ENCODE measurements at regions of chr15 and their contacts with region 1.

Region 1: DNA sequence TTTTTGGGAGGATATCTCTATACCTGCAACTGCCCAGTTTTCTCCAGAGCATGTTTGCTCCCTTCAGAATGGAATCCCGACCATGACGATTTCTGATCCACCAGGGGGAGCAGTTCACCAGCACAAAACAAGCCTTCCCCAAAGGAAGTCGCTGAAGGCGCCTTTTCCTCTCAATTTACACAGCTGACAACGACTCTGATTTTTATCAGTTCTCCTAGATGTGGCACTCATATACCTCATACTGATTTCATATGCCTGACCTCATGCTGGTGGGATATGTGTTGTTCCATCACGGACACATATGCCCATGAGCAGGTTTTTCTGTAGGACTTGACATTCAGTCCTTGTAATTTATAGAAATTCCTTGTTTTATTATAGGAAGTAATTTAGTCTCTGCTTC is 1028.2 kb downstream of the MCTP2 start:
- DNase-seq: peak; percentile 43
- ATAC-seq: peak; percentile 79

Region 2: GRCh38 chr15:95843241-95843910 is 583.9 kb after region 1 on chr15:
- intact Hi-C with region 1: loop called (anchors 10 kb)
- DNase-seq: peak; percentile 53
- ATAC-seq: peak; percentile 71

Region 3: DNA sequence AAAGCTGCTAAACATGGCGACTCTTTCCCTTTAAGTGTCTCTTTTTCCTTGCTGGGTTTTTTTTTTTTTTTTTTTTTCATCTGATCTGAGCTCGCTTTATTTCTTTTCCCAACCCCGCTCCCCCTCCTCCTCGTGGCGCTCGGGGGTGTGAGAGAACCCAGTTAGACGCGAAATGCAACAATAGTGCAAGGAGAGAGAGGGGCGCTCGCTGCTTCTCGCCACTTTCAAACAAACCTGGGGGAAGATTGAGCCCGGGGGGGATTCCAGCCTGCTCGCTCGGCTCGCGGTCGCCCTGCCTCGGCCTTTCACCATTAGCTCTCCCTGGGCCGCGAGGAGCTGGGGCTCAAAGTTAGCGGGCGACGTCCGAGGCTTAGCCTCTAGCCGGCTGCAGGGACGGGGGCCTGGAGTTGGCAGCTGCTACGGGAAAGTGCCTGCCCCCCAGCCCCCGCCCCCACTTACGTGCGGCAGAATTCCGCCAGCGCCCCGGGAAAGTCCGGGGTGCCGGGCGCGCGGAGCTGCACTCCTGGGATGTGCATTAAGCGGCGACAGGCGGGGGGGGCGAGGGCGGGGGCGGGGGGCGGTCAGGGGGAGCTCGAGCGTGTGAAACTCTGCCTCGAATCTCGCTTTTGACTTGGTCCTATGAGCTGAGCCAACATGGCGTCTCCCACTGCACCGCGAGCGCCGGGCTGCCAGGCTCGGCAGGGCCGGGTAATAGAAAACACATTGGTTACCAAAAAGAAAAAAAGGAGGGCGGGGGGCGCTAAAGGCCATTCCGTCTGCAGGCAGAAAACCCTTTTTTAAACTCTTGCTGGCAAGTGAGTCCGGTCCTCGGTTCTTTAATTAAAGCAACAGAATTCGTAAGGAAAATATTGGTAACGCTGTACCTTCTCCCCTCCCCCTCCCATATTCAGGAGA is 1081.3 kb after region 1 on chr15:
- intact Hi-C with region 1: loop called (anchors 5 kb)
- DNase-seq: peak; percentile 62
- ATAC-seq: peak; percentile 68

Region 4: DNA sequence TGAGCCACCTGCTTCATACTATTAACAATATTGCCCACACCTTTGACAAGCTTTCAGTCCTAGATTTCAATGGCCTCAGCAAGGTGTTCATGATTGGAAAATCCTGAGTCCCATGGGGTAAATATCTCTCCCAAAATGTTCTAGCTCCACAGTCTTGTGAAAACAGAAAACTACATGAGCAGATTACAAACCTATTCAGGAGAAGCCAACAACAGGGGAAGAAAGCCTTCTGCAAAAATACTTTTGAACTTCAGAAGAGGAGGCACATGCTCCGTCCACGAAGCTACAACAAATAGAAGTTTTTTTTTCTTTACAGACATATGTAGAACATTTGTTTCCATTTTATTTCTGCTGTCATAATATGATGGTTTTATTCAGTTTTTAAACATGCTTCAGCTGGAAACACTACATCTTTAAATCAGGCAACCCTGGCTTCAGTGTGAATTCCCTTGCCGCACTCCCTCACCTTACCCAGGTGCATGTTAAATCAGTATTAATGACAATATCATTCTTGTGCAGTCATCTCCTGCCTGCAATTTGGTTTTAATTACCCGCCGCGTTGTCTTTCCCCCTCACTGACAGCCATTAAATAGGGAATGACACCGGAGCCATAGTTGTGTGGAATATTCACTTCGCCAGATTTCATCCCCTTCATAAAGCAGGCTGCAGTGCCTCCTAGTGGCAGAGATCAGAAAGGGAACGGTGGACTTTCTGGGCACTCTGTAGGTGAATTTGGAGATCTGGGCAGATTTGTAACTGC is 1975.5 kb after region 1 on chr15:
- intact Hi-C with region 1: loop called (anchors 10 kb)
- DNase-seq: peak; percentile 40
- ATAC-seq: peak; percentile 65